GM13977 (cell line): ENCODE measurements at regions of chr1 and their contacts with region 1.

Region 1: GRCh38 chr1:169707912-169708604 is 3.4 kb downstream of the SELL start:
- DNase-seq: no peak
- CTCF ChIP-seq: no peak

Region 2: DNA sequence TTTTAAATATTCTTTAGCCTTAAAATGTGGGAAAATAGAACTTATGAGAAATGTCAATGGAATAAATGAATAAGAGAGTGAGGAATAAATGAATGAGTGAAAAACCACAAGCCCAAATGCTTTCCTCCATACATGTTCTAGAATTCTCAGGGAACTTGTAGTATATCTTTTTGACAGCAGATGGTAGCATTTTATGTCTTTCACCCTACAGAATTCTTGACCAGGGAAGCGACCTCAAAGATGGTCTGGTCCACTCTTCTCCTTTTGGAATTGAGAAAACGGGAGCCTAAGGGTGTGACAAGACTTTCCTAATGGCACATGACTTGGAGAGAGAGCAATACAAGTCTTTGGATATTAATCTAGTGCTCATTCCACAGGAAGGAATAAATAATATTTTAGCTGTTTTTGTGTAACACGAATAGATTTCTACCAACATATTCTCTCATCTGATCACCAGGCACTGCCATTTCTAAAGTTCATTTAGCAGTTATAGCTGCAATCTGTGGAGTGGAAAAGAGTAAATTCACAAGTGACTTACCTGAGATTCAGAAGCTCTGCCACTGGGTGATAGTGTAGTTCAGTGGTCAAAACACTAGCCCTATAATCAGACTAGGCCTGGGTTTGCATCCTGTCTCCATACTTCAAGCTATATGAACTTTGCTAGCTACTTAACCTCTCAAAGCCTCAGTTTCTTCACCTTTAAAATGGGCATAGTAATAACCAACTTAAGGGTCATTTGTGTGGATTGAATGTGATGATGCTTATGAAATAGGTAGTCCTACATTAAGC is 106.8 kb before region 1 on chr1:
- in situ Hi-C with region 1: loop called (anchors 5 kb)
- DNase-seq: peak; percentile 8
- CTCF ChIP-seq: peak; percentile 52